Caco-2 (cell line): ENCODE measurements at regions of chr12 and their contacts with region 1.

Region 1: GRCh38 chr12:513451-513850 is 53.7 kb downstream of the B4GALNT3 start:
- DNase-seq: peak; percentile 88 to 91
- H3K4me3 ChIP-seq: no peak overlapping the region
- H3K4me3 Mint-ChIP-seq: peak overlapping the region; percentile 54
- H3K27ac Mint-ChIP-seq: peak overlapping the region; percentile 94
- H3K4me1 ChIP-seq: peaks cover 74% of the 10 kb centered on the region
- H3K4me1 Mint-ChIP-seq: peaks cover 49% of the 10 kb centered on the region
- H3K27me3 ChIP-seq: no peaks in the 10 kb centered on the region
- H3K27me3 Mint-ChIP-seq: no peaks in the 10 kb centered on the region
- CTCF ChIP-seq: no peak

Region 2: GRCh38 chr12:484117-484516 is 29.3 kb before region 1 on chr12:
- CTCF ChIA-PET with region 1: no interaction called
- POLR2A ChIA-PET with region 1: no interaction called
- intact Hi-C with region 1: loop called (anchors 1 kb)
- DNase-seq: no peak
- H3K4me3 ChIP-seq: no peak overlapping the region
- H3K4me3 Mint-ChIP-seq: no peak overlapping the region
- H3K27ac Mint-ChIP-seq: peak overlapping the region; percentile 36
- H3K4me1 ChIP-seq: peaks cover 16% of the 10 kb centered on the region
- H3K4me1 Mint-ChIP-seq: peaks cover 35% of the 10 kb centered on the region
- H3K27me3 ChIP-seq: no peaks in the 10 kb centered on the region
- H3K27me3 Mint-ChIP-seq: no peaks in the 10 kb centered on the region
- CTCF ChIP-seq: no peak

Region 3: DNA sequence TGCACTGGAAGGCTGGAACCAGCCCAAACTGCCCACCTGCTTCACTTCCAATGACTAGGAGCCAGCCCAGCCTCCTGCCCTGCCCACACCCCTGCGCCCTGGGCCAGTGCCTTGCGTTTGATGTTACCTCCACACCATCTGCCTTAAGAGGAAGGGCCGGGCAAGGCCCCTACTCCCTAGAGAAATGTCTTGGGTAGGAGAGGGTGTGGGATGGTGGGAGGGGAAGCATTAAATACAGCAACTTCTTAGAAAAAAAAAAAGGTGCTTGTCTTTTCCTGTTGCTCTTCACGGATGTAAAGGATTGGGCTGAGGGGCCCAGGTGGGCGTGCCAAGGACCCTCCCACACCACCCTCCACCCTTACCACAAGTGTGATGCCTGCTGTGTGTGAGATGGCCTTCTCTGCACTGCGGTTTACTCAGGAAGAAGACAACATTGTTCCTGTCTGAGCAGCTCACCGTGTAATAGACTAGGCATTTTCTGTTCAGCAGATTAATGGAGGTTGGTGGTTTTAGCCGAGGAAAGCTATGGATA is 49.9 kb after region 1 on chr12:
- CTCF ChIA-PET with region 1: no interaction called
- POLR2A ChIA-PET with region 1: no interaction called
- intact Hi-C with region 1: no loop called
- DNase-seq: no peak
- H3K4me3 ChIP-seq: no peak overlapping the region
- H3K4me3 Mint-ChIP-seq: no peak overlapping the region
- H3K27ac Mint-ChIP-seq: no peak overlapping the region
- H3K4me1 ChIP-seq: 0 out of 2 replicates have a peak, but pooled peaks cover under 1% of the 10 kb centered on the region
- H3K4me1 Mint-ChIP-seq: peaks cover 3% of the 10 kb centered on the region
- H3K27me3 ChIP-seq: no peaks in the 10 kb centered on the region
- H3K27me3 Mint-ChIP-seq: no peaks in the 10 kb centered on the region
- CTCF ChIP-seq: no peak